ENCODE measurements at regions of chr10 and their contacts with region 1.

Region 1: DNA sequence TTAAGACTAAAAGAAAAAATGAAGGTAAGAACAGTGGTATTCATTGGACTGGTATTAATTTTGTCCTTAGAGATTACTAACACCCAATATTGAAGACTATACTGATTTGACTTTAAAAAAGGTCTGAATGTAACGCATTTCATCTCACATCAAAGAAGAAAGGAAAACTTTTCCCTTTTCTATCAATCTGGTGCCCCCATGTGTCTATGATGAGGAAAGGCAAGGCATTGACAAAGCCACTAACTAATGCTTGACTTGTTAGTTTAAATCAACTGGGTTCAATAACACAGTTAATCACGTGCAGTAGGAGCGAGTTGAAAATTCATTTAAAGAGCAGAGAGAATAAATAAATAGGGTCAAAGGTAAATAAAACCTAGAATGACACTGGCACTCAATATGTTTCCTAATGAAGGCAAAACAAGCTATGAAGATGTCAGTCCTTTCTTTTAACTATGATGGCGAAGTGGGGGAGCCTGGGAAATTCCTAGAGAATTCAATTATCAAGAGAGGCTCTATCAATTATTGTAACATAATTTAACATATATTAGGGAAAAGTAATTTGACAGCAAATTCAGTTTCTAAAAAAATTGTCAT is 180.9 kb downstream of the ANK3 start:
- DNase-seq: no peak

Region 2: GRCh38 chr10:60099998-60100747 is 108.6 kb before region 1 on chr10:
- intact Hi-C with region 1: loop called (anchors 5 kb)
- DNase-seq: no peak

Measured in posterior vena cava (tissue), 2 donors.